ENCODE measurements at regions of chr5 and their contacts with region 1.

Region 1: GRCh38 chr5:32232441-32233219 is 58.5 kb upstream of the GOLPH3 start:
- DNase-seq: peak; percentile 75 to 88 (median 82)
- H3K4me3 ChIP-seq: no peak overlapping the region
- H3K27ac ChIP-seq: peak overlapping the region in 57 of 59 donors; percentile 17 to 89 (median 64)
- H3K27me3 ChIP-seq: no peaks in the 10 kb centered on the region
- CTCF ChIP-seq: peak; percentile 71 to 97 (median 90)

Region 2: DNA sequence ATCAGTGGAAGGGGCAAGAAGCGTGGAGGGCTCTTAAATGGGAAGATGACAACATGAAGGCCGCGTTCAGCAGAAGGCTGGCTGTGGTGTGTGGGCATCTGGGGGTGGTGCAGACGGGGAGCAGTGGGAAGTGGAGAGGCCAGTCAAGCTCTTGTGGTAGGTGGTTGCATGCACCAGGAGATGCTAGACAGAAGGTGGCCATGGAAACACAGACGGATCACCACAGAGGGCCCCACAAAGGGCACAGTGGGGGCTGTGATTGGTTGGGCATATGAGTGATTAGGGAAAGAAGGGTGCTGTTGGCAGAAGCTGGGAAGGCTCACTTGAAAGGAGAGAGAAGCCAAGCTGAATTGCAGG is 65.4 kb after region 1 on chr5:
- intact Hi-C with region 1: no loop called
- DNase-seq: peak in 6 of 10 donors; percentile 29 to 74 (median 48)
- H3K4me3 ChIP-seq: no peak overlapping the region
- H3K27ac ChIP-seq: peak overlapping the region in 25 of 59 donors; percentile 2 to 83 (median 43)
- H3K27me3 ChIP-seq: no peaks in the 10 kb centered on the region
- CTCF ChIP-seq: no peak

Region 3: DNA sequence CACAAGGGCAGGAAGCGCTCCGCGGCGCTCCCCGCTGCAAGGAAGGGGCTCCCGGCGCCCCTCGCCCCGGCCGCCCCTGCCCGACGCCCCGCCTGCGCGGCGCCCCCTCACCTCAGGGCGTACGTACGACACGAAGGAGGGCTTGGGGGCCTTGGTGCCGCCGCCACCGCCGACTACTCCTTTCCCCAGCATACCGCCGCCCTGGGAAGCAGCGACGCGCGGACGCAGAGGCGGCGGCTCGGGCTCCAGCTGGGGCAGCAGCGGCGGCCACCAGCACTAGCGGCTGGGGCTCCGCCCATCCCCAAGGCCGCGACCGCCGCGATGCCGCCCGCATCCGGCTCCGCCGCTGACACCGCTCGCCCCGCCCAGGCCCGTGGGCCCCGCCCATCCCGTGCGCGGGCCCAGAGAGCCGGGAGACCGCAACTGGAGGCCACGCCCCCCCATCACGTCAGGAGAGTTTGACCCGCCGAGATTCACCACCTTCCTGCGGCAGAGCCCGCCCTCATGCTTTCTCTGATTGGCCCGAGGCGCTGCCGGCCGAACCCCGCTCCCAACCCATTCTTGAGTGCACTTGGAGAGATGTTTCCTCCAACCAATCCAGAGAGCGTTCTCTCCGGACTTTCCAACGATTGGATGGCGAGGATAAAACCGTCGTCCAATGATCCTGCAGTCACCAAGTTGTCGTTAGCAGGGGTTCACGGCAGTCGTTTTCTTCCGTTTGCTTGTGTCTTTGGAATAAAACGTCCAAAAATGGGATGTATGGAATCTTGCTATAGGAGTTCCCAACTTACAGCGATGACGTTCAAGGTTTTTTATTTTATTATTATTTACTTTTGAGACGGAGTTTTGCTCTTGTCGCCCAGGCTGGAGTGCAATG is 80.3 kb after region 1 on chr5 and contains the start of gene MTMR12:
- intact Hi-C with region 1: loop called (anchors 1 to 5 kb)
- DNase-seq: peak; percentile 98 to 100 (median 100)
- H3K4me3 ChIP-seq: peak within 1 kb of the TSS; percentile 64 to 100 (median 91)
- H3K27ac ChIP-seq: peak within 1 kb of the TSS; percentile 46 to 99 (median 92)
- H3K27me3 ChIP-seq: no peaks in the 10 kb centered on the region
- CTCF ChIP-seq: peak in 20 of 56 donors; percentile 6 to 40 (median 20)
- total RNA-seq, gene MTMR12: 24.4 to 67.2 (median 41.4) TPM

Region 4: GRCh38 chr5:32444431-32445286 is 212.0 kb after region 1 on chr5 and contains the start of gene ZFR:
- intact Hi-C with region 1: loop called in 1 of 2 experiments (anchors 10 kb)
- DNase-seq: peak; percentile 82 to 96 (median 90)
- H3K4me3 ChIP-seq: peak within 1 kb of the TSS; percentile 65 to 98 (median 88)
- H3K27ac ChIP-seq: peak within 1 kb of the TSS; percentile 64 to 97 (median 92)
- H3K27me3 ChIP-seq: no peaks in the 10 kb centered on the region
- CTCF ChIP-seq: peak in 18 of 56 donors; percentile 5 to 42 (median 17)
- total RNA-seq, gene ZFR: 85.2 to 155 (median 104) TPM

Region 5: GRCh38 chr5:32585446-32586275 is 353.0 kb after region 1 on chr5 and contains the start of gene SUB1:
- intact Hi-C with region 1: loop called (anchors 2 to 5 kb)
- DNase-seq: peak; percentile 90 to 97 (median 95)
- H3K4me3 ChIP-seq: peak within 1 kb of the TSS; percentile 67 to 100 (median 94)
- H3K27ac ChIP-seq: peak within 1 kb of the TSS; percentile 76 to 100 (median 97)
- H3K27me3 ChIP-seq: no peaks in the 10 kb centered on the region
- CTCF ChIP-seq: peak in 21 of 56 donors; percentile 3 to 51 (median 25)
- total RNA-seq, gene SUB1: 106 to 285 (median 202) TPM

Measured in dorsolateral prefrontal cortex (tissue), 120 donors.